ENCODE measurements at regions of chr2 and their contacts with region 1.

Region 1: DNA sequence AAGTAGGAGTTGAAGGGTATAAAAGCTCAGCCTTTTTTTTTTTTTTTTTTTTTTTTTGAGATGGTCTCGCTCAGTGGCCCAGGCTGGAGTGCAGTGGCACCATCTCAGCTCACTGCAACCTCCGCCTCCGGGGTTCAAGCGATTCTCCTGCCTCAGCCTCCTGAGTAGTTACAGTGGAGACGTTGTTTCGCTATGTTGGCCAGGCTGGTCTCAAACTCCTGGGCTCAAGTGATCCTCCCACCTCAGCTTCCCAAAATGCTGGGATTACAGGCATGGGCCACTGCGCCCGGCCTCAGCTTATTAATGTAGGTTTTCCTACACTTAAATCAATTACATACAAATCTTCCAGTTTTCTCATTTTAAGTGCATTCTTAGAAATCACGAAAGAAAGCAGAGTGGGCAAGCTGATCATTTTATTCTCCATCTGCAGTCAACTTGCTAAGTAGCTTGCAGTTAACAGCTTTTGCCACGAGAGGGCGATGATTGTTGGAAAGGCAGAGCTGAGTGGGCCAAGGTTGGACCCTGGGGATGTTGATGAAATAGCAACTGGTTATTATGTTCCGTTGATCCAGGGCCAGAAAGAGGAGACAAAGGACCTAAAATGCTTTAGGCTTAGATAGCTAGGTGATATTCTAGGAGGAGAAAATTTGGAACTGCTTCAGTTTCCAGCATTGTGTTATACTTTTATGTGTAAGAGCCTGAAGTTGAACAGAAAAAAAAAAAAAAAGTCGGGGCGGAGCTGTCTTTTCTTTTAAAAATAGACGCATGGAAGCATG is 234.4 kb upstream of the EPAS1 start:
- DNase-seq: peak; percentile 53 to 78
- ATAC-seq: peak; percentile 75 to 80 (median 78)
- H3K4me3 ChIP-seq: no peak overlapping the region
- H3K4me3 Mint-ChIP-seq: no peak overlapping the region
- H3K27ac ChIP-seq: no peak overlapping the region
- H3K27ac Mint-ChIP-seq: no peak overlapping the region
- H3K4me1 ChIP-seq: no peaks in the 10 kb centered on the region
- H3K4me1 Mint-ChIP-seq: peaks cover 5 to 11% of the 10 kb centered on the region in 2 donors
- H3K27me3 ChIP-seq: no peaks in the 10 kb centered on the region
- H3K27me3 Mint-ChIP-seq: no peaks in the 10 kb centered on the region
- CTCF ChIP-seq: peak; percentile 88

Region 2: DNA sequence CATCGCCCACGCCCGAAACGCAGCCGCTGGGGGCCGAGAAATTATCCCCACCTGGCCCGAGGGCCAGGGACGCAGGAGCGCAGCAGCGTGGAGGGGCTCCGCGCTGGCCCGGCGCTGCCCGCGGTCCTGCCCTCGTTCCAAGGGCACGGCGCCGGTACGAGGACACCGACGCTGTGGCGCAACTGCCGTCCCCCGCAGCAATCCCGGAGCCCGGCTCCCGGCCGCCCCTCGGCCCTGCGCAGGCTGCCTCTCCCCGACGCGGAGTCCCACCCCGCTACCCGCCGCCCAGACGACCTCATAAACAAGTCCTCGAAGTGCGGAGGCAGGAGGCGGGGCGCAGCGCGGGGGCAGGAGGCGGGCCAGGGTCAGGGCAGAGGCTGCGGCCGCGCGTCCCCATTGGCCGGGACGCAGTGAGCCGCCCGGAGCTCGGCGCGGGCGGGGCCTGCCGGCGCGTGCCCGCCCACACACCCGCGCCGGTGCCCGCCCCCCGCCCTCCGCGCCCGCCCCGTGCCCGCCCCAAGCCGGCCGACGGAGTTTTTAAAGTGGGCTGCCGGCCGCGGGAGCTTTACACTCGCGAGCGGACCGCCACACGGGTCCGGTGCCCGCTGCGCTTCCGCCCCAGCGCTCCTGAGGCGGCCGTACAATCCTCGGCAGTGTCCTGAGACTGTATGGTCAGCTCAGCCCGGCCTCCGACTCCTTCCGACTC is 234.2 kb after region 1 on chr2 and contains the start of gene EPAS1:
- intact Hi-C with region 1: loop called (anchors 5 kb)
- DNase-seq: peak; percentile 76 to 87
- ATAC-seq: peak; percentile 92 to 95 (median 94)
- H3K4me3 ChIP-seq: peak within 1 kb of the TSS; percentile 90
- H3K4me3 Mint-ChIP-seq: peak within 1 kb of the TSS; percentile 94
- H3K27ac ChIP-seq: peak within 1 kb of the TSS; percentile 24
- H3K27ac Mint-ChIP-seq: peak within 1 kb of the TSS in 1 of 2 donors; percentile 81
- H3K4me1 ChIP-seq: peaks cover 33% of the 10 kb centered on the region
- H3K4me1 Mint-ChIP-seq: peaks cover 26 to 33% of the 10 kb centered on the region in 2 donors
- H3K27me3 ChIP-seq: peaks cover 41% of the 10 kb centered on the region
- H3K27me3 Mint-ChIP-seq: peaks cover 45 to 46% of the 10 kb centered on the region in 2 donors
- CTCF ChIP-seq: no peak
- total RNA-seq, gene EPAS1: 2.1 to 61.4 (median 3.6) TPM

Region 3: GRCh38 chr2:46364797-46365457 is 302.1 kb after region 1 on chr2:
- intact Hi-C with region 1: loop called (anchors 1 kb)
- DNase-seq: peak in 1 of 2 donors; percentile 78
- ATAC-seq: peak in 1 of 3 donors; percentile 27
- H3K4me3 ChIP-seq: no peak overlapping the region
- H3K4me3 Mint-ChIP-seq: no peak overlapping the region
- H3K27ac ChIP-seq: no peak overlapping the region
- H3K27ac Mint-ChIP-seq: no peak overlapping the region
- H3K4me1 ChIP-seq: peaks cover 23% of the 10 kb centered on the region
- H3K4me1 Mint-ChIP-seq: peaks cover 37% of the 10 kb centered on the region in 2 donors
- H3K27me3 ChIP-seq: no peaks in the 10 kb centered on the region
- H3K27me3 Mint-ChIP-seq: peaks cover 13 to 23% of the 10 kb centered on the region in 2 donors
- CTCF ChIP-seq: peak; percentile 92

Region 4: DNA sequence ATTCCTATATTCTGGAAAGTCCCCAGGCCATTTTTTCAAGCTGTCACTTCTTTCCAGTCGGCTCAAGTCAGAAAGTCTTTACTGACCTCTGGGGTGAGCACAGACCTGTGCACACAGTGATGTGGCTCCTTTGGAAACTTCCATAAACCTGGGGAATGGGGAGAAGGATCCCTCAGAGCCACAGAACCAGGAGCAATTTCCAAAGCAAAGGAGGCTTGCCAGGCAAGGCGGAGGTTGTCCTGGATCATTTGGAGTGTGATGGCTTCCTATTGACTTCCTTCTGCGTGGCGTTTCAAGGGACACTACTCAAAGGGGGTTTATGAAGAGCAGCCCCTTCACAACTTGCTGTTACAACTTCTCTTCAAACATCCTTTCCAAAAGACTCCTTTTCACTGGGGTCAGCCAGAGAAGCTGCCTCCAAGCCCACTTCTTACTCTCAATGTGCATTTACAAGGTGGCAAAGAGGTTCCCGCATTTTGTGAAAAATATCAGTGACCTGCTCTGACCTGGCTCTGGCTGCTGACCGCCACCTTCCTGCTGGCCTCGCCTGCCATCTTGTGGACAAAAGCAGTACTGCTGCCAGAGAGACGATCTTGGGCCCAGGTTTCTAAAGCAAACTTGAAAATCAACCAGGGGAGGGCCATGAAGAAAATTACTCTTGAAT is 398.3 kb after region 1 on chr2:
- intact Hi-C with region 1: loop called (anchors 1 kb)
- DNase-seq: peak; percentile 80 to 83
- ATAC-seq: peak; percentile 77 to 82 (median 81)
- H3K4me3 ChIP-seq: no peak overlapping the region
- H3K4me3 Mint-ChIP-seq: no peak overlapping the region
- H3K27ac ChIP-seq: no peak overlapping the region
- H3K27ac Mint-ChIP-seq: peak overlapping the region in 1 of 2 donors; percentile 0
- H3K4me1 ChIP-seq: peaks cover 10% of the 10 kb centered on the region
- H3K4me1 Mint-ChIP-seq: peaks cover 16% of the 10 kb centered on the region in 2 donors
- H3K27me3 ChIP-seq: no peaks in the 10 kb centered on the region
- H3K27me3 Mint-ChIP-seq: peaks cover 5 to 7% of the 10 kb centered on the region in 2 donors
- CTCF ChIP-seq: peak; percentile 99

Region 5: DNA sequence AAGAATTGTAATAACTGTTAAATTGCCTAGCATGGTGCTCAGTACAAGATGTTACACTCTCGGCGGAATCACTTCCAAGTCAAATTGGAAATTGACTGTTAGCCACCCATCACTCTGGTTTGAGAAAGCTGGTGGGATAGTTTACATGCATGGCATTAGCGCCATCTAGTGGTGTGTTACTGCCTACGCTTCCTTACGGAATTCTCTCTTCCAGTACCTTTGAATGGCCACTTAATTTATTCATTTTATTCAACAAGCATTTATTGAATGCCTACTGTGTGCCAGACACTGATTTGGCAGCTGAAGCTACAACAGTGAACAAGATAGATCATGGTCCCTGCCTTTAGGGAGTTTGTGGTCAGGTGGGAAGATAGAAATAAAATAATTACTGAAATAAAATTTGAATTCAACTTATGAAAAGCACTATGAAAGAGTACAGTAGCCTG is 587.8 kb after region 1 on chr2:
- intact Hi-C with region 1: loop called (anchors 1 kb)
- DNase-seq: peak; percentile 44 to 90
- ATAC-seq: peak; percentile 84 to 93 (median 85)
- H3K4me3 ChIP-seq: no peak overlapping the region
- H3K4me3 Mint-ChIP-seq: no peak overlapping the region
- H3K27ac ChIP-seq: no peak overlapping the region
- H3K27ac Mint-ChIP-seq: no peak overlapping the region
- H3K4me1 ChIP-seq: no peaks in the 10 kb centered on the region
- H3K4me1 Mint-ChIP-seq: no peaks in the 10 kb centered on the region
- H3K27me3 ChIP-seq: no peaks in the 10 kb centered on the region
- H3K27me3 Mint-ChIP-seq: no peaks in the 10 kb centered on the region
- CTCF ChIP-seq: peak; percentile 98